Keratinocyte (primary cell): ENCODE measurements at regions of chr21 and their contacts with region 1.

Region 1: GRCh38 chr21:37916310-37917051 is at the start of gene KCNJ6:
- DNase-seq: no peak
- H3K4me3 ChIP-seq: peak within 1 kb of the TSS in 2 of 3 experiments; percentile 18
- H3K27ac ChIP-seq: no peak within 1 kb of the TSS
- H3K4me1 ChIP-seq: no peaks in the 10 kb centered on the region
- H3K27me3 ChIP-seq: peaks cover 45% of the 10 kb centered on the region
- CTCF ChIP-seq: peak; percentile 35 to 87 (median 84)
- polyA plus RNA-seq, gene KCNJ6: not detected in 3 replicates

Region 2: GRCh38 chr21:37700641-37701202 is 215.8 kb before region 1 on chr21:
- dilution Hi-C with region 1: loop called (anchors 25 kb)
- DNase-seq: peak; percentile 26
- H3K4me3 ChIP-seq: no peak overlapping the region
- H3K27ac ChIP-seq: no peak overlapping the region
- H3K4me1 ChIP-seq: no peaks in the 10 kb centered on the region
- H3K27me3 ChIP-seq: peaks cover 4% of the 10 kb centered on the region
- CTCF ChIP-seq: peak; percentile 79 to 83 (median 80)

Region 3: GRCh38 chr21:38037416-38037815 is 120.9 kb after region 1 on chr21:
- dilution Hi-C with region 1: no loop called
- DNase-seq: no peak
- H3K4me3 ChIP-seq: no peak overlapping the region
- H3K27ac ChIP-seq: no peak overlapping the region
- H3K4me1 ChIP-seq: peaks cover 5% of the 10 kb centered on the region
- H3K27me3 ChIP-seq: no peaks in the 10 kb centered on the region
- CTCF ChIP-seq: no peak